ENCODE measurements at regions of chr5 and their contacts with region 1.

Region 1: DNA sequence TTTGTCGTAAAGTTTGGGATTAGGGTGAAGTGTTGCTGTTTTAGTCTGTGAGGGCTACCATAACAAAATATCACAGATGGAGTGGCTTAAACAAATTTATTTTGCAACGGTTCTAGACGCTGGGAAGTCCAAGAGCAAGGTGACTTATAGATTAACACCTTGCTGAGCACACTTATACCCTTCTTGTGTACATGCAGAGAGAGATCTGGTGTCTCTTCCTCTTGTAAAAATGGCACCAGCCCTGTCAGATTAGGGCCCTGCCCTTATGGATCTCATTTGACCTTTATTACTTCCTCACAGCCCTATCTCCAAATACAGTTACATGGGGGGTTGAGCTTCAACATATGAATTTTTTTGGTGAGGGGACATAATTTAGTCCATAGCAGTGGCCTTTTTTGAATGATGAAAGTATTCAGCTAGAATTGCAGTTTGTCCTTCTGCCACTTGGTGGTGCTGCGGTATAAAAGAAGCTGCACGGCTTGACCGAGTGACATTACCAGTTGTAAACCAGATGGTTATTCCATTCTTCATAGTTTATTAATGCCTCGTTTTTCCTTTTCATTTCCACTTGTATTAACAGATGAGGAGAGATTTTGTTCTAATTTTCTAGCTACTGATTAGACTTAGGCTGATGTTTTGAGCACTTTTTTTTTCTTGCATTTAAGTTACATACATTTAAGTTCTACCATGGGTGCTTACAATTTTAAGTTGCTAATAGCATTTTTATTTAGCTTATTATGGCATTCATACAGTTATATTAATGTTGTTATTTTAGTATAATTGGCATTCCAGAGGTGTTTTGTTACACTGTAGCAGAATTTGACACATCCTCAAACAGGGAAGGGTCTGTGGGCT is 19.4 kb downstream of the DCP2 start:
- DNase-seq: peak; percentile 45
- CTCF ChIP-seq: peak; percentile 88

Region 2: DNA sequence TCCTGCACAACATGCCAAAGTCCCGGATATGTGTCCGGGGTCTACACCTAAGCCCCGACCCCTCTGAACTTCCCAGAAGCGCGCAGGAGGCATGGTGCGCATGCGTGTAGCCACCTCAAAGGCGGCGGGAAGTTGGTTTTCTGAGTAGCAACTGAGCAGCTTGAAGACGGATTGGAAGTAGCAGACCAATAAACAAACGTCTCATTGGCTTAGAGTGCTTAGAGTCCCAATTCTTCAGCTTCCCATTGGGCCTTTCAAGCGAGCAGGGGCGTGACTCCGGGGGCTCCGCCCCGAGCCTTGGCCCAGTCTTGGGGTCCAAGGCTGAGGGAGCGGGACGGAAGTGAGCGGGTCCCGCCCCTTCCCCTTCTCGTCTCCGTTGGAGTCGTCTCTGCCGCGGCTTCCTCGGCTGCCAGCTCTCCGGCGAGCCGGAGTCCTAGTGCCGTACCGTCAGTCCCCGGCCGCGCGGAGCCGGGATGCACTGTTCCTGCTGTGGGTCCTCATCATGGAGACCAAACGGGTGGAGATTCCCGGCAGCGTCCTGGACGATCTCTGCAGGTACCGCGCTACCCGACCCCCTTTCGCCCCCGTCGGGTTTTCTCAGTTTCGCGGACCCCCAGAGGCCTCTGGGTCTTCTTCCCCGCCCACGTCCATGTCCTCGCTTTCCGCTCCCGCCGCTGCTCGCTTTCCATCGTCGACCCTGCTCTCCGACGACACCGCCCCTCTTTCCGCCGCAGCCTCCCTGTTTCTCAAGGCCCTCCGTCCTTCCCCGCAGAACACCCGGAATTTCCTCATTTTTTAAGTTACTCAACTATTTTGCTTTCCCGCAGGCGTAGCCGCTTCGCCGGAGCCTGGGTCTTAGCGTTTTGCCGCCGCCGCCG is 19.3 kb before region 1 on chr5 and contains the start of gene DCP2:
- CTCF ChIA-PET with region 1: interaction called, 38 read pairs
- POLR2A ChIA-PET with region 1: no interaction called
- DNase-seq: peak; percentile 97
- CTCF ChIP-seq: no peak

Region 3: DNA sequence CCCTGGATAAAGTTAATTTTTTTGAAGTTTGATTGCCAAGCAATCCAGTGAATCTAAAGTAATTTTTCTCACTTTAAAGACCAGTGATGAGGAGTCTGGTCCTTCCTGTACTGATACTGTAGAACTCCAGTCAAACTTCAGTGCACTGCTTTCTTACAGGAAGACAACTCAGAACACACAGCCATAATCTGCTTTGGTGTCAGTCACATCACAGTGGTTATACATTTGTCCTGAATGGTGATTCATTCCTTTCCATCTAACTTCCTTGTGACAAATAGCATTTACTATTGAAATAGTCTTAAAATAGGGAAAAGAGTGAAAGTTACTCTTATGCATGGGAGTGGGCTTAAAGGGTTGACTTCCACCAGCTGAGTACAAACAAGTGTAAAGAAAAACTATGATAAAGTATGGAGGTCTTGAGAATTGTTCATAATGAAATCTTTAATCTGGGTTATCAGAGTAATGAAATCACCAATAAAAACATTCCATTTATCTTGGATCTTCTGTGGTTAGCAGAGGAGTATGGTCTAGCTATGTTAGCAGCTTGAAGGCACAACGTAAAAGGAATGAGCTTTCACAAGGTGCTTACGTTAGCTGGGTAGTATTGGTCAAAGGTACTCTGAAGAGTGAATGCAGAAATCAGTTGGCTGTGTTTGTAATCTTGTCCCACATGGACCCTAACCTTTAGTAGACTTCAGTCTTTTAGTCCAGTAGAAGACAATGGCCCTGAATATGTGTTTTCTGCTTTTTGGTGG is 22.1 kb after region 1 on chr5:
- CTCF ChIA-PET with region 1: interaction called, 11 read pairs
- POLR2A ChIA-PET with region 1: no interaction called
- DNase-seq: no peak
- CTCF ChIP-seq: no peak

Region 4: DNA sequence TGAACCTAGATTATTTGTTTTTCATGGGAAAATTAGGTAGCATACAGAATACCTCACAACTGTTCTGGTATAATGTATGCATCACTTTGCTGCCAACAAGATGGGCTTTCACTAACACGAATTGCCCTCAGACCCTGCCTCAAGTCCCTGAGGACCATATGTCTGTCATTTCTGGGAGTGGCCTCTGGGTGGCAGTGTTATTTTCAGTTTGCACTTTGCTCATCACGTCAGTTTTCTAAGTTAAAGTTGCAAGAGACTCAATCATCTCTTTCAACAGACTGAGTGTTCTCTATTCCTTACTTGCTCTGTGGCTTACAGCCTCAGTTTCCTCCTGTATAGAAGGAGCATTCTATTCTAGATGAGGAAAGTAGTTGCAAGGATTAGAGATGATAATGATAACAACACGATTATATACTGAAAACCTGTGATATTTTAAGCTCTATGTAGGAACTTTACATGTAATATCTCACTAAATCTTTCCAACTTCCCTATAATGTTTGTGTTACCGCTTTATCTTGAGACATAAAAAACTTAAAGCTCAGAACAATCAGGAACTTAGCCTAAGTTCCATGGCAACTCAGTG is 383.1 kb after region 1 on chr5:
- CTCF ChIA-PET with region 1: interaction called, 13 read pairs
- POLR2A ChIA-PET with region 1: no interaction called
- DNase-seq: peak; percentile 60
- CTCF ChIP-seq: peak; percentile 84

Region 5: DNA sequence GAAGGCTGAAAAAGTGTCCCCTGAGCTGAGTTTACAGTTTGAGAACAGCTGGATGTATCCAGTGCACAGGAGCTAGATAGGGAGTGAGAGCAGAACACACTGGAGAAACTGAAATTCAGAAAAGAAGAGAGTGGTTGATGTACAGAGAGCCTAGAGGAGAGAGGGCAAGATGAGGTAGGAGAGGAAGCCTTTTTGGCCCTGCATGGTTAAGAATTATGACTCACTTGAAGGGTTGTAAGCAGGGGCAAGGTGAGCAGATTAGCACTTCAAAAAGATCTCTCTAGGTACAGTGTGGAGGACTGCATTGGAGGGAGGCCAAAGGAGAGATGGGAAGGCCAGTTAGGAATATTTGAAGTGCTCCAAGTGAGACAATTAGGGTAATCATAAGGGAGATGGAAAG is 467.0 kb after region 1 on chr5:
- CTCF ChIA-PET with region 1: no interaction called
- POLR2A ChIA-PET with region 1: no interaction called
- DNase-seq: no peak
- CTCF ChIP-seq: no peak

Region 6: GRCh38 chr5:113606298-113607134 is 610.5 kb after region 1 on chr5:
- CTCF ChIA-PET with region 1: interaction called, 39 read pairs
- POLR2A ChIA-PET with region 1: no interaction called
- DNase-seq: peak; percentile 32
- CTCF ChIP-seq: peak; percentile 67

Measured in GM10248 (cell line).